ENCODE measurements at regions of chr3 and their contacts with region 1.

Region 1: GRCh38 chr3:150408221-150409102 is at the start of gene TSC22D2:
- DNase-seq: peak; percentile 50
- H3K4me3 ChIP-seq: peak within 1 kb of the TSS; percentile 84
- H3K27me3 ChIP-seq: no peaks in the 10 kb centered on the region
- CTCF ChIP-seq: 0 out of 2 replicates have a peak, but pooled peaks have one; percentile 9
- polyA plus RNA-seq, gene TSC22D2: 8.4 and 13.9 TPM in 2 replicates

Region 2: DNA sequence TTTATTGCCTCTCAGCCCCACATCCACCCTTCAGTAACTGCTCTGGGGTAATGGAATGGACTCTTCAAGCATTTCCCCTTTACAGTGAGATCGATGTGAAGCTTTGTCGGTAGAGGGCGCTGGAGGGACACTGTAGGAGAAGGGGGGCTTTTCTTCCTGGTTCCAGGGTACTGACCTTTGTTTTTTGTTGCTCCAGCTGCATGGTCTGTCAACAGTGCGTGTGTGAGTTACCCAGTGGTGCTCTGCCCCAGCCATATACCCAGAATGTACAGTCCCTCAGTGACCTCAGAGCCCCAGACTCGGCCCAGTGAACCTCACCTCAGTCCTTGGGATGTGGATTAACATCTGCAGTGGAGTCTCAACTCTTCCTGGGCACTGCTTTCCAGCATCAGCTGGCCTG is 180.6 kb before region 1 on chr3:
- CTCF ChIA-PET with region 1: interaction called, 10 read pairs
- POLR2A ChIA-PET with region 1: no interaction called
- DNase-seq: no peak
- H3K4me3 ChIP-seq: no peak overlapping the region
- H3K27me3 ChIP-seq: no peaks in the 10 kb centered on the region
- CTCF ChIP-seq: peak; percentile 86

Region 3: GRCh38 chr3:150238998-150239619 is 169.4 kb before region 1 on chr3:
- CTCF ChIA-PET with region 1: interaction called, 23 read pairs
- POLR2A ChIA-PET with region 1: no interaction called
- DNase-seq: no peak
- H3K4me3 ChIP-seq: no peak overlapping the region
- H3K27me3 ChIP-seq: no peaks in the 10 kb centered on the region
- CTCF ChIP-seq: peak; percentile 38; the same call in 1 of the 2 replicates

Region 4: GRCh38 chr3:150296123-150296735 is 112.2 kb before region 1 on chr3:
- CTCF ChIA-PET with region 1: interaction called, 3 read pairs
- POLR2A ChIA-PET with region 1: interaction called, 16 read pairs
- DNase-seq: no peak
- H3K4me3 ChIP-seq: no peak overlapping the region
- H3K27me3 ChIP-seq: no peaks in the 10 kb centered on the region
- CTCF ChIP-seq: no peak

Region 5: GRCh38 chr3:150396956-150397550 is 11.4 kb before region 1 on chr3:
- CTCF ChIA-PET with region 1: no interaction called
- POLR2A ChIA-PET with region 1: no interaction called
- DNase-seq: no peak
- H3K4me3 ChIP-seq: no peak overlapping the region
- H3K27me3 ChIP-seq: no peaks in the 10 kb centered on the region
- CTCF ChIP-seq: no peak

Region 6: DNA sequence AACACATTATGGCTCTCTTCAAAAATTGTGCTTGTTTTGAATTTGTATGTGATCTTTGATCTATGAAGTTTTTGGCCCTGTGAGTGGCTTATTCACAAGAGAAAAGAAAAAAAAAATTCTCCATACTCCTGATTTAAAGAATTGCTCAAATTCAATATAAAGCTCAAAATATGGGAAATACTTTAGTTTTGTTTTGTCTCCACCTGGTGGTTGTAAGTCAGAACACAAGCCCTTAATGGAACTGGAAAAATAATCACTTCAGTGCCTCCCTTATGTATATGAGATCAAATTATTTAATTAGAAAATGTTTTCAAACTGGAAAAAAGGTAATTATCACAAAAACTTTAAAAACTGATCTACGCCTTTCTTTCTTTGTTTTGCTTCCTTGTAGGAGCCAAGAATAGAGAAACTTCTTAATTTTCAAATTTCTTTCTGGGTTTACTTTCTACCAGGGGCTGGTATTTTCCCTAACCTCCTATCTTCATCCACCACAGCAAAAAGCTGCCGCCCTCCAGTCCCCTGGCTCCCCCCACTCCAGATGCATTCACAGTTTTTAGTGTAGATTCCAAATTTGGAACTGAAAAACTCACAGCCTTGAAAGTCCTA is 87.2 kb after region 1 on chr3:
- CTCF ChIA-PET with region 1: interaction called, 48 read pairs
- POLR2A ChIA-PET with region 1: interaction called, 4 read pairs
- DNase-seq: no peak
- H3K4me3 ChIP-seq: no peak overlapping the region
- H3K27me3 ChIP-seq: no peaks in the 10 kb centered on the region
- CTCF ChIP-seq: peak; percentile 57

Region 7: DNA sequence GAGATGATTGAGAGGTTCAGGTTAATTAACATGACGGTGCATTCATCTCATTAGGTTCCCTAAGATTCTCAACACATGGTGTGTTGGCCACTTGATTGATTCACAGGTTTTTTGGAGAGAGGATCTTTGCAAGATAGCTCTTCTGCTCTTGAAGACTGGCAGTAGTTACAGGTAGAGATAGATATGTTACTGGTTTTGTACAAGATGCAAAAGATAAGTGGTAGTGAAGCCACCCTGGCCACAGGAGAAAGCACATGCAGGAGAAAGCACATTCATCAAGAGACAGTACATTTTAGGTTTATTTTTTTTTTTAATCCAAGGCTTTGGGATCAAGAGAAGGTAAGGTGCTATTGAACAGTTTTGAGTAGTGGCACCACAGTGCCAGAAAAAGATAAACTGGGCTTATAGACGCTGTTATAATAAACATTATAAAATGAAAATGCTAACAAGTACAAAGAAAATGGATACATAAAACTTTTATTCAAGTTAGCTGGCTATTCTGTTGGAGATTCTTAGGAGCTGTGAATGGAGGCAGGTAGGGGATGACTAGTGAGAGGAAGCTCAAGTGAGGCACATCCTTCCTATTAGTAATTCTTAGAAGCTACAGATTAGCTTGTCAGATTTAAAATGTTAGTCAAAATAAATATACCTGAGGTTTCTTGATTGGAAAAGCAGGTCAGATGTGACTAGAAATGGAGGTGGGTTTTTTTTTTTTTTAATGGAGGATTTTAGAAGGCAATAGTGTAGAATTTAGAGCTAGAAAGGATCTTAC is 205.4 kb after region 1 on chr3:
- CTCF ChIA-PET with region 1: no interaction called
- POLR2A ChIA-PET with region 1: no interaction called
- DNase-seq: no peak
- H3K4me3 ChIP-seq: no peak overlapping the region
- H3K27me3 ChIP-seq: no peaks in the 10 kb centered on the region
- CTCF ChIP-seq: no peak